Activated T-helper 1 cell treated with anti-CD3 and anti-CD28 coated beads, Interleukin-12 subunit alpha, Interleukin-12 subunit beta, Interleukin-2, Interleukin-4 antibody, amounts not matched to agents 30 ng/mL and 10 ng/mL and 1 ng/mL, durations not matched to agents 14 hours and 24 hours and 36 hours (primary cell): ENCODE measurements at regions of chr2 and their contacts with region 1.

Region 1: DNA sequence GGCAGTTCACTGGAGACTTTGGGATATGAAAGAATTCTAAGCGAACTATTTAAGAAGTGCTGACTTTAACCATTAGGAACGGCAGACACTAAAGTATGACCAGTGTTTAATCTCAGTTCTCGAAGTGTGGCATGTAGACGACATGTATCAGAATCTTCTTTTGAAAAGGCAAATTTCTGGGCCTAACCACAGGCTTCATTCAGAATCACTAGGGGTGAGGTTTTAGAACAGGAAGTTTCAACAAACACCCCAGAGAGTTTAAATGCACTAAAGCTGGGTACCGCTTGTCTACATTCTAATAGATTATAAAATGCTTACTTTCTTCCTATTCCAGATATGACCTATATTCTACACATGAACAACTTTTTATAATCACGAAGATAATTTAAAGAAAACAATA is 180.3 kb downstream of the ANKRD44 start:
- DNase-seq: no peak
- H3K4me3 Mint-ChIP-seq: peak overlapping the region; percentile 68
- H3K27ac Mint-ChIP-seq: peak overlapping the region; percentile 80
- H3K4me1 Mint-ChIP-seq: peaks cover 66% of the 10 kb centered on the region
- H3K27me3 Mint-ChIP-seq: no peaks in the 10 kb centered on the region

Region 2: GRCh38 chr2:196944584-196944983 is 185.7 kb before region 1 on chr2:
- intact Hi-C with region 1: no loop called
- DNase-seq: no peak
- H3K4me3 Mint-ChIP-seq: no peak overlapping the region
- H3K27ac Mint-ChIP-seq: no peak overlapping the region
- H3K4me1 Mint-ChIP-seq: peaks cover 13% of the 10 kb centered on the region
- H3K27me3 Mint-ChIP-seq: peaks cover 6% of the 10 kb centered on the region

Region 3: GRCh38 chr2:197145471-197146138 is 15.3 kb after region 1 on chr2:
- intact Hi-C with region 1: loop called (anchors 1 kb)
- DNase-seq: no peak
- H3K4me3 Mint-ChIP-seq: no peak overlapping the region
- H3K27ac Mint-ChIP-seq: peak overlapping the region; percentile 87
- H3K4me1 Mint-ChIP-seq: peaks cover 68% of the 10 kb centered on the region
- H3K27me3 Mint-ChIP-seq: no peaks in the 10 kb centered on the region